Heart right ventricle (tissue), 16 donors: ENCODE measurements at regions of chr1 and their contacts with region 1.

Region 1: DNA sequence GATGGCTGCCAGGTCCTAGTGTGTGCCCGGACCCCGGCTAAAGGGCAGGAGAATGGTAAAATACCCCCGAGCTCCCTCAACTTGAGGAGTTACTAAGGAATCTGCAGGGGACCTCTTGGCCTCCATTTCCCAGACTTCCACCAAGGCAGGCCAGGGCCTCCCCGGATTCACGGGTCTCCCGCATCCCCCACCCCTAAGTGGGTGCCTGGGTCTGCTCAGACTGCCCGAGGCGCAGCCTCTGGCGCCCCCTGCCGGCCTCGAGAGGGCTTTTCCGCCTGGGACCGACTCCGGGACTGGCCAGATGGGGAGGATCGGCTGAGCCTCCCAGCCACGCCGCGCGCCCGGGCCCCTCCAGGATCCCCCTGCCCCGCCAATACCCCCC is 1.7 kb downstream of the PLEKHG5 start:
- DNase-seq: peak; percentile 64 to 75
- ATAC-seq: peak; percentile 55 to 79 (median 69)
- H3K4me3 ChIP-seq: peak overlapping the region; percentile 45 to 70 (median 64)
- H3K27ac ChIP-seq: peak overlapping the region in 8 of 10 donors; percentile 74 to 89 (median 82)
- H3K4me1 ChIP-seq: peaks cover 12 to 89% (median 62%) of the 10 kb centered on the region in 9 donors
- H3K27me3 ChIP-seq: peaks cover 0 to 31% (median 5%) of the 10 kb centered on the region in 7 donors
- CTCF ChIP-seq: peak; percentile 81 to 97 (median 93)

Region 2: GRCh38 chr1:6523566-6523965 is 33.8 kb after region 1 on chr1:
- intact Hi-C with region 1: loop called in 9 of 10 experiments (anchors 2 to 5 kb)
- DNase-seq: no peak
- ATAC-seq: peak in 7 of 8 donors; percentile 56 to 73 (median 66)
- H3K4me3 ChIP-seq: no peak overlapping the region
- H3K27ac ChIP-seq: peak overlapping the region in 1 of 10 donors; percentile 26
- H3K4me1 ChIP-seq: peaks cover 0 to 19% (median 9%) of the 10 kb centered on the region in 9 donors
- H3K27me3 ChIP-seq: no peaks in the 10 kb centered on the region
- CTCF ChIP-seq: peak; percentile 26 to 68 (median 57)

Region 3: DNA sequence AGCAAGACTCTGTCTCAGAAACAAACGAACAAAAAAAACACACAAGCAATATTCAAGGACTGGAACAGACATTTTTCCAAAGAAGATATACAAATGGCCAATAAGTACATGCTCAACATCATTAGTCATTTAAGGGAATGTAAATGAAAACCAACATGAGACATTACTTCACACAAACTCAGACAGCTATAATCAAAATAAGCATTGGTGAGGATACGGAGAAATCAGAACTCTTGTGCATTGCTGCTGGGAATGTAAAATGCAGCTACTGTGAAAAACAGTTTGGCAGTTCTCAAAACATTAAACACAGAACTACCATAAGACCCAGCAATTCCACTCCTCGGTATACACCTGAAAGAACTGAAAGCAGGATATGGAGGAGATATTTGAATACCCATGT is 49.2 kb after region 1 on chr1:
- intact Hi-C with region 1: loop called in 1 of 10 experiments (anchors 10 kb)
- DNase-seq: no peak
- ATAC-seq: no peak
- H3K4me3 ChIP-seq: no peak overlapping the region
- H3K27ac ChIP-seq: no peak overlapping the region
- H3K4me1 ChIP-seq: peaks cover 0 to 9% (median 3%) of the 10 kb centered on the region in 9 donors
- H3K27me3 ChIP-seq: no peaks in the 10 kb centered on the region
- CTCF ChIP-seq: no peak

Region 4: GRCh38 chr1:6547301-6547700 is 57.5 kb after region 1 on chr1:
- intact Hi-C with region 1: loop called in 1 of 10 experiments (anchors 5 kb)
- DNase-seq: no peak
- ATAC-seq: peak in 2 of 8 donors; percentile 36 to 41
- H3K4me3 ChIP-seq: no peak overlapping the region
- H3K27ac ChIP-seq: peak overlapping the region in 5 of 10 donors; percentile 28 to 86 (median 63)
- H3K4me1 ChIP-seq: peaks cover 0 to 30% (median 16%) of the 10 kb centered on the region in 9 donors
- H3K27me3 ChIP-seq: no peaks in the 10 kb centered on the region
- CTCF ChIP-seq: peak in 3 of 9 donors; percentile 5 to 16 (median 11)

Region 5: DNA sequence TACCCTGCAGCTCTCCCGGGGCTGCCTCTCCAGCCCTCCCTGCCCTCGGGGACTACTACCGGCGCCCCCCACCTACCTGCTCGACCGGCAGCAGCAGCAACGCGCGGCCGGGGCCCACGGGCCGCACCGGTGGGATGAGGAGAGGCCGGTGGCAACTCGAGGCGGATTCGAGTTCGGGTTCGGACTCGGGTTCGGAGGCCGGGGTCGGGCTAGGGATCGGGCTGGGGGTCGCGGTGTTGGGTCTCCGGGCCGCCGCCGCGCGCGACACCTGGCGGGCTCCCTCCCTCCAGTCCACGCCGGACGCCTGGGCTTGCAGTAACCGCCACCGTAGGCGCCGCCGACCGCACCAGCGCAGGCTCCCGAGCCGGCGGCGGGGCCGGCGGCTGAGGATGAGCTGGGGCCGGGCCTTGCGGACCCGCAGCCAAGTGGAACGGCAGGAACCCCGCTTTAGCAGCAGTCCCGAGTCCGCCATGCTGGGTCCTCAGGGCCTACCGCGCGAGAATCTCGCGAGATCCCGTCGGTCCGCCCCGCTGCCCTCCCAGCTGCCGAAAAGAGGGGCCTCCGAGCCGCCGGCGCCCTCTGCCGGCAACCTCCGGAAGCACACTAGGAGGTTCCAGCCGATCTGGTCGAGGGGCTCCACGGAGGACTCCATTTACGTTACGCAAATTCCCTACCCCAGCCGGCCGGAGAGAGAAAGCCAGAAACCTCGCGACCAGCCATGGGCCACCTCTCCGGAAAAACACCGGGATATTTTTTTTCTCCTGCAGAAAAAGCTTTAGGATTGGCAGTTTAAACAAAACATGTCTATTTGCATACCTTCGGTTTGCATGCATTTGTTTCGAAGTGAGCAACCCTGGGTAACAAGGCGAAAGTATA is 64.5 kb after region 1 on chr1 and contains the start of gene NOL9:
- intact Hi-C with region 1: loop called in 2 of 10 experiments (anchors 1 to 5 kb)
- DNase-seq: peak; percentile 96
- ATAC-seq: peak; percentile 96 to 99 (median 98)
- H3K4me3 ChIP-seq: peak within 1 kb of the TSS; percentile 79 to 100 (median 94)
- H3K27ac ChIP-seq: peak within 1 kb of the TSS; percentile 20 to 90 (median 85)
- H3K4me1 ChIP-seq: peaks cover 10 to 26% (median 22%) of the 10 kb centered on the region in 9 donors
- H3K27me3 ChIP-seq: no peaks in the 10 kb centered on the region
- CTCF ChIP-seq: peak; percentile 93 to 98 (median 96)
- total RNA-seq, gene NOL9: 13.5 to 19.3 (median 15.3) TPM

Region 6: DNA sequence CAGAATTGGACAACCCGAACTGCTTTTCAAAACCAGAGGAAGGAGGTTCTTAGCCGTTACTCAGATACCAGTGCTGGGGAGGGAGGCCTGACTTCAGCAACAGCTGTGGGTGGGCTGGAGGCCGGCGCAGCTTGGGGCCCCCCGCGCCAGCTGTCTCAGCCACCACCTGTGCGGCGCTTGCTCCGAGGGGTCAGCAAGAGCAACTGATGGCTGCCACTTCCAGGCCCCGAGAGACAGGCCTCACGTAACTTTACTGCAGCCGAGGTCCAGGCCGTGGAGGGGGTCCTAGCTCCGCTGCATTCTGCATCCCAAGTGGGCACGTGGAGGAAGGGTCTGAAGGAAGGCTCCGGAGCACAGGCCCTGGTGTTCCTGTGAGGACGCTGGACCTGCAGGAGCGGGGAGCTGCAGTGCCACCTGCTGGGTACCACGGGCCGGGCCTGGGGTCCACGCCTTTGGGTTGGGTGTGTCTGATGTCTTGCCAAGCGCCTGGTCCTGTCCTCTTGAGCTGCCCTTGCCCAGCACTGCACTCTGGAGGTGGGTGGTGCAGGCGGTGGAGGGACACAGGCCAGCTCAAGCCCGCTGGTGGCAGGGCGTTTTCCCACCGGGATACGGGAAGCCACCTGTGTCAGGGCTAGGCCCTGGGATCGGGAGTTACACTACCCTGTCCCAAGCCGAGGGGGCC is 144.7 kb after region 1 on chr1:
- intact Hi-C with region 1: loop called in 1 of 10 experiments (anchors 10 kb)
- DNase-seq: peak; percentile 69 to 73
- ATAC-seq: peak; percentile 61 to 82 (median 78)
- H3K4me3 ChIP-seq: no peak overlapping the region
- H3K27ac ChIP-seq: peak overlapping the region in 2 of 10 donors; percentile 2 to 60
- H3K4me1 ChIP-seq: peaks cover 0 to 12% (median 0%) of the 10 kb centered on the region in 9 donors
- H3K27me3 ChIP-seq: no peaks in the 10 kb centered on the region
- CTCF ChIP-seq: peak in 8 of 9 donors; percentile 36 to 68 (median 54)

Region 7: DNA sequence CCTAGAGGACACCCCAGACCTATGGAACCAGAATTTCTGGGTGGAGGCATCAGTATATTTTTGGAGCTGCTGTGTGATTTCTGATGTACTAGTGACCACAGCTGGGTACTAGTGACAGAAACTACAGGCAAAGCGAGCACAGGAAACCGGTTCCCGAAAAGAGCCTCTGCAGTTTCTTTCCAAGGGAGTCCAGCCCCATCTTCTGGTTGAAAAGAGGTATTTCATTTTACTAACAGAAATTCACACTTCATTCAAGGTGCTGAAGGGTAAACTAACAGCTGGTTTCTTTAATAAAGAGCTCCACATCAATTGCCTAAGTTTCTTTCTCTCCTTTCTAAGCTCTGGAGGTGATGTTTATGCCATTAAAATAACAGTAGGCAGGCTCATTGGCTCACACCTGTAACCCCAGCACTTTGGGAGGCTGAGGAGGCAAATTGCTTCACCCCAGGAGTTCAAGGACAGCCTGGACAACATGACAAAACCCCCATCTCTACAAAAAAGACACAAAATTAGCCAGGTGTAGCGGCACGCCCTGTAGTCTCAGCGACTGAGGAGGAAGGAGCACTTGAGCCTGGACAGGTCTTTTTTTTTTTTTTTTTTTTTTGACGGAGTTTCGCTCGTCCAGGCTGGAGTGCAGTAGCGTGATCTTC is 156.8 kb after region 1 on chr1:
- intact Hi-C with region 1: loop called in 5 of 10 experiments (anchors 1 to 10 kb)
- DNase-seq: no peak
- ATAC-seq: peak; percentile 14 to 68 (median 44)
- H3K4me3 ChIP-seq: no peak overlapping the region
- H3K27ac ChIP-seq: no peak overlapping the region
- H3K4me1 ChIP-seq: no peaks in the 10 kb centered on the region
- H3K27me3 ChIP-seq: no peaks in the 10 kb centered on the region
- CTCF ChIP-seq: peak; percentile 32 to 72 (median 65)

Region 8: GRCh38 chr1:6757719-6758435 is 268.1 kb after region 1 on chr1:
- intact Hi-C with region 1: no loop called
- DNase-seq: no peak
- ATAC-seq: no peak
- H3K4me3 ChIP-seq: no peak overlapping the region
- H3K27ac ChIP-seq: no peak overlapping the region
- H3K4me1 ChIP-seq: peaks cover 0 to 2% (median 0%) of the 10 kb centered on the region in 9 donors
- H3K27me3 ChIP-seq: peaks cover 0 to 15% (median 8%) of the 10 kb centered on the region in 7 donors
- CTCF ChIP-seq: no peak